Heart left ventricle (tissue), 16 donors: ENCODE measurements at regions of chr11 and their contacts with region 1.

Region 1: DNA sequence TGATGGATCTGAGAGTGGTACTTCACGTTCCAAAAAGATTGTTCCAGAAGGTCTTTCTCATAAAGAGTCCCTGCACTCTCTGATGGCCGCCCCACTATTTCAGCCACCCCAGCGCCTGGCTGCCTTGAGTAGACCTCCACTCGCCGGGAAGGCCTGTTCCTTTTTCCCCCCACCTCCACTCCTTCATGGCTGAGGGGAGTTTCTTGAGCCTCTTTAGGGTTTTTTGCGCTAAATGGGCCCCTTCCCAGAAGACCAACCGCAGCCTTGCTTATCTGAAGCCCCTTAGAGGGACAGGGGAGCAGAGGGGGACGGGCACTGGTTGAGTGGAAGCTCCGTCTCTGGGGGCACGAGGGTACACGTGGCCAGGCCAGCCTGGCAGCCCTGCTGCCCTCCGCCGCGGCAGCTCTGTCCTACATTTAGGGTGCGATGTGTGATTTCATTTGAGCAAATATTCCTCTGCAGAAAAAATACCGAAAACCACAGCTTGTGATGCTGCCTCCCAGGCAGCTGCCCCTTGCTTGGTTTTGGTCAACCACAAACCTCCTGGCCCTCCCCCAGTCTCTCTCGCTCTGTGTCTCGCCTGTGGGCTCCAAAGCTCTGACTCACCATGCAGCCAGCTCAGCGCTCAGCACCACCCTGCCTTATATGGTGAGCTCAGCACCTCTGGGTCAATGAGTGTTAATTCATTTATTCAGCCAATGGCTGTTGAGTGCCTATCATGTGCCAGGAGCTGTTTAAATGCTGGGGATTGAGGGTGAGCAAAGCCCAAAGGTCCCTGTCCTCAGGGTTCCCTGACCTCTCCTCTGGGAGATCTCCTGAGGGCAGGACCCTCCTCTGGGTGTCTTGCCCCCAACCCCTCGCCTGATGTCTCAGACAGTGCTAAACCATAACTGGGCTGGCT is 88.6 kb downstream of the TP53I11 start:
- DNase-seq: peak; percentile 74 to 91 (median 81)
- ATAC-seq: peak; percentile 88 to 94 (median 90)
- H3K4me3 ChIP-seq: no peak overlapping the region
- H3K27ac ChIP-seq: peak overlapping the region; percentile 49 to 95 (median 84)
- H3K4me1 ChIP-seq: peaks cover 0 to 58% (median 28%) of the 10 kb centered on the region in 12 donors
- H3K27me3 ChIP-seq: no peaks in the 10 kb centered on the region
- CTCF ChIP-seq: no peak
- POLR2A ChIP-seq: no peak

Region 2: GRCh38 chr11:44755556-44756523 is 106.3 kb before region 1 on chr11:
- intact Hi-C with region 1: no loop called
- DNase-seq: peak in 1 of 5 donors; percentile 53
- ATAC-seq: peak in 3 of 4 donors; percentile 28 to 45 (median 40)
- H3K4me3 ChIP-seq: no peak overlapping the region
- H3K27ac ChIP-seq: peak overlapping the region in 7 of 12 donors; percentile 26 to 79 (median 44)
- H3K4me1 ChIP-seq: peaks cover 13 to 73% (median 44%) of the 10 kb centered on the region in 12 donors
- H3K27me3 ChIP-seq: no peaks in the 10 kb centered on the region
- CTCF ChIP-seq: no peak
- POLR2A ChIP-seq: no peak

Region 3: GRCh38 chr11:44766112-44766971 is 95.8 kb before region 1 on chr11:
- intact Hi-C with region 1: loop called in 1 of 10 experiments (anchors 5 kb)
- DNase-seq: peak; percentile 77 to 92 (median 77)
- ATAC-seq: peak; percentile 85 to 90 (median 86)
- H3K4me3 ChIP-seq: no peak overlapping the region
- H3K27ac ChIP-seq: peak overlapping the region; percentile 63 to 96 (median 90)
- H3K4me1 ChIP-seq: peaks cover 11 to 83% (median 60%) of the 10 kb centered on the region in 12 donors
- H3K27me3 ChIP-seq: no peaks in the 10 kb centered on the region
- CTCF ChIP-seq: peak in 2 of 12 donors; percentile 10 to 23
- POLR2A ChIP-seq: no peak

Region 4: DNA sequence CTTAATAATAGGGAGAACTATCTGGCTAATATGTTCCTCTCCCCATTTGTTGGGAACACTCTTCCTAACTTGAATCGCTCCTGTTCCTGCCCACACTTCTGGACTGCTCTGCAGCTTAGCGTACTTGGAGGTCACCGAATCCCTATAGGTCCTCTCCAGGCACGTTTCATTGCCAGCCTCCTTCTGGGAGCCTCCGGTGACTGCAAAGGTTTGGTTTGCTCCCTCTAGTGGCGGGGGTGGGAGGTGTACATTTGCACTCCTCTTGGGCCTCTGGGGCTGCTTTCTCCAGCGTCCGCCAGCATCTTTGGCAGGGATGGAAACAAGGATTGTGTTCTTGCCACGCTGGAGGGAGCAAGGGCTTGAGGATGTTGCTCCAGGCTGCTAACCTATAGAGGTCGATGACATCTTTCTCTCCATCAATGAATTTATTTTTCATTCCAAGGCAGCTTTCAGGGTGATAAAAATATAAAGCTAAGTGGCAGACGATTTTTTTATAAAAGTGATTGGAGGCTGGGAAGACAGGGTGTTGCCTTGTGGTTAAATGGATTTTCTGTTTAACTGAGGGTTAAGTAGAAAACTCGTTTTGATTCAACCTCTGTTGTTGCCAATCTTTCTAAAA is 86.6 kb before region 1 on chr11:
- intact Hi-C with region 1: loop called in 2 of 10 experiments (anchors 5 to 10 kb)
- DNase-seq: peak; percentile 50 to 75 (median 71)
- ATAC-seq: peak; percentile 21 to 53 (median 45)
- H3K4me3 ChIP-seq: no peak overlapping the region
- H3K27ac ChIP-seq: peak overlapping the region in 11 of 12 donors; percentile 29 to 92 (median 76)
- H3K4me1 ChIP-seq: peaks cover 7 to 91% (median 65%) of the 10 kb centered on the region in 12 donors
- H3K27me3 ChIP-seq: no peaks in the 10 kb centered on the region
- CTCF ChIP-seq: peak; percentile 56 to 77 (median 66)
- POLR2A ChIP-seq: no peak

Region 5: DNA sequence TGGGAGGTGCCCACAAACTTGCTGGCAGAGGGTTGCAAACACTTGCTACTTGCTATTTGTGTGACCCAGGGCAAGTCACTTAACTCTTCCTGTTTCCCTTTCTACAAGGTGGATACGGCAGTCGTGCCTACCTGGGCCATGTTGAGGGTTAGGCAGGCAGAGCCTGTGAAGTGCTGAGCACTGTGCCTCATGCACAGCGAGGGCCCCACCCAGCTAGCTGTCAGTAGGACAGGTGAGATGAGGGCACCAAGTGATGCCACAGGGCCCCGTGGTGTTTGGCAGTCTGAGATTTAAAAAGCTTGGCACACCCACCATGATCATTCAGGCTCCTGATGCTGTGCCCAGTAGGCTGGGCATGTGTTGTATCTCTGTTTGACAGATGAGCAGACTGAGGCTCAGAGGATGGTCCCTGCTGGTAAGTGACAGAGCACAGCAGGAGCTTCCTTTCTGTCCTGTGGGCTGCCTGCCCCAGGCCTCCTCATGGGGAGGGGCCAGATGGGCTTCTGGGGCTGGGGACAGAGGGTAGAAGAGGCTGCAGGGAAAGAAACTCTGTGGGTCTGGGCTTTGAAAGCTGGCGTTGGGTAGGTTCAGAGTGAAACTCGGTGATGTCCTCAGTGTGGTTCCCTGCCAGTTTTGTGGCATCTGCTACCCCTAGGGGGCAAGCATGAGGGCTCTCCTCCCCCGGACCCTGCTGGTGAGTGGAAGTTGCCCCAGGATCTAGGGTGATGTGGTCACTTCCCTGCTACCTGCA is 76.1 kb before region 1 on chr11:
- intact Hi-C with region 1: loop called in 1 of 10 experiments (anchors 10 kb)
- DNase-seq: no peak
- ATAC-seq: peak in 3 of 4 donors; percentile 26 to 42 (median 33)
- H3K4me3 ChIP-seq: no peak overlapping the region
- H3K27ac ChIP-seq: peak overlapping the region in 3 of 12 donors; percentile 15 to 17 (median 17)
- H3K4me1 ChIP-seq: peaks cover 7 to 76% (median 39%) of the 10 kb centered on the region in 12 donors
- H3K27me3 ChIP-seq: no peaks in the 10 kb centered on the region
- CTCF ChIP-seq: peak in 3 of 12 donors; percentile 12 to 32 (median 20)
- POLR2A ChIP-seq: no peak

Region 6: DNA sequence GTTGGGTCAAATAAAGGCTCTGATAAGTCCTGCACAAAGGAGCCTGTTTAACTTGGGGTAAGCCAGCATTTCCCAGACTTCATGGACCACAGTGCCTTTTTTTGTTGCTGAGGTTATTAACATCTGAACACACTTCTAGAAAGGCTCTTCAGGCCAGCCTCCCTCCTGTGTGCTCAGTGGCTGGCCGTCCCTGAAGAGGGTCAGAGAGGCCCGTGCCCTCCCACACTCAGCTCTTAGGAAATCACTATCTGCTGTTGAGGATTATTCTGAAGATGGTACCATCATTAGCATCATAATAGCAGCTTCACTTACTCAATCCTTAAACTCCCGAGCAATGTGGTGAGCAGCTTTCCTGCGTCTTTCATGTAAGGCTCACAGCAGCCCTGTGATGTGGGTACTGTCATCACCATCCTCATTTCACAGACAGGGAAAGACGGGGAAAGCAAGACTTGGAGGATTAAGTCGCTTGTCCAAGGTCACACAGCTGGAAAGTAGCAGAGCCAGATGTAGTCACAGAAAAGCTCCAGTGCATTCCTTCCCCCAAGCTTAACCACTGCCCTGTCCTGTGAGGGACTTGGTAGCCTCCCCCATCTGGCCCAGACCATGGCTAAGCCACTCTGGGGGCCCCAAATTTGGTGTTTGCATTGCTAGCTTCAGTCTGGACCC is 64.0 kb before region 1 on chr11:
- intact Hi-C with region 1: loop called in 1 of 10 experiments (anchors 5 kb)
- DNase-seq: no peak
- ATAC-seq: peak in 1 of 4 donors; percentile 25
- H3K4me3 ChIP-seq: no peak overlapping the region
- H3K27ac ChIP-seq: no peak overlapping the region
- H3K4me1 ChIP-seq: peaks cover 0 to 41% (median 8%) of the 10 kb centered on the region in 12 donors
- H3K27me3 ChIP-seq: no peaks in the 10 kb centered on the region
- CTCF ChIP-seq: no peak
- POLR2A ChIP-seq: no peak

Region 7: GRCh38 chr11:44814881-44815592 is 47.1 kb before region 1 on chr11:
- intact Hi-C with region 1: loop called in 3 of 10 experiments (anchors 5 kb)
- DNase-seq: no peak
- ATAC-seq: peak in 1 of 4 donors; percentile 15
- H3K4me3 ChIP-seq: no peak overlapping the region
- H3K27ac ChIP-seq: peak overlapping the region in 7 of 12 donors; percentile 10 to 47 (median 36)
- H3K4me1 ChIP-seq: peaks cover 6 to 96% (median 74%) of the 10 kb centered on the region in 12 donors
- H3K27me3 ChIP-seq: no peaks in the 10 kb centered on the region
- CTCF ChIP-seq: no peak
- POLR2A ChIP-seq: no peak

Region 8: GRCh38 chr11:44823006-44823405 is 39.1 kb before region 1 on chr11:
- intact Hi-C with region 1: loop called in 2 of 10 experiments (anchors 5 kb)
- DNase-seq: no peak
- ATAC-seq: no peak
- H3K4me3 ChIP-seq: no peak overlapping the region
- H3K27ac ChIP-seq: no peak overlapping the region
- H3K4me1 ChIP-seq: peaks cover 0 to 78% (median 39%) of the 10 kb centered on the region in 12 donors
- H3K27me3 ChIP-seq: no peaks in the 10 kb centered on the region
- CTCF ChIP-seq: peak in 4 of 12 donors; percentile 7 to 30 (median 18)
- POLR2A ChIP-seq: no peak

Region 9: DNA sequence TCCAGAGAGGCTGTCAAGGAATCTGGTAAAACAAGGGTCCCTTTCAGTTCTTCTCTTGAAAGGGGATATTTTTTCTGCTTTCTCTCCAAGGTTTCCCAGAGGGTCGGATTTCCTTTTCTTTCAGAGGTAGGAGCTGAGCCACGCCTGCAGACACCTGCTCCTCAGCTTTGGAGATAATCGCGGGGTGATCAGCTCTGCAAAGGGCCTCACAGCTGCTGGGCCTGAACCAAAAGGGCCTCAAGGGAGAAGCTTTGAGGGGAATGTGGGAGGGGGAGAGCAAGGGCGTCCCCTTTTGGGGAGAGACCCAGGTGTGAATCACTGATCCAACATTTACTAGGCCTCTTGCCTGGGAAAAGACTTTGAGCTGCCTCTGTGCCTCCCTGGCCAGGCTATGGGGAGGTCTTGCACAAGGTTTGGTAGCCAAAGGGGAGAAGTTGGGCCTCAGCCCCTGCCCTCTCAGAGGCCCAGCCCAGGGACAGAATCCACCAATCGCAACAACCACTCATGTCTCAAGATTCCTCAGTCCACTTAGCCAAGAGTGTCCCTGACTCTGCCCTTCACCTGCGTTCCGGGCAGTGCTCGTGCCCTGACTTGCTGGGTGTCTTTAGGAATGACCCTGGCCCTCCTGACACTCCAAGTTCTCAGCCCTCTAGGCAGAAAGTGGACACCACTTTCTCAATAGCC is 102.6 kb after region 1 on chr11:
- intact Hi-C with region 1: no loop called
- DNase-seq: no peak
- ATAC-seq: no peak
- H3K4me3 ChIP-seq: no peak overlapping the region
- H3K27ac ChIP-seq: no peak overlapping the region
- H3K4me1 ChIP-seq: no peaks in the 10 kb centered on the region
- H3K27me3 ChIP-seq: no peaks in the 10 kb centered on the region
- CTCF ChIP-seq: no peak
- POLR2A ChIP-seq: no peak